K562 (cell line): ENCODE measurements at regions of chr6 and their contacts with region 1.

Region 1: DNA sequence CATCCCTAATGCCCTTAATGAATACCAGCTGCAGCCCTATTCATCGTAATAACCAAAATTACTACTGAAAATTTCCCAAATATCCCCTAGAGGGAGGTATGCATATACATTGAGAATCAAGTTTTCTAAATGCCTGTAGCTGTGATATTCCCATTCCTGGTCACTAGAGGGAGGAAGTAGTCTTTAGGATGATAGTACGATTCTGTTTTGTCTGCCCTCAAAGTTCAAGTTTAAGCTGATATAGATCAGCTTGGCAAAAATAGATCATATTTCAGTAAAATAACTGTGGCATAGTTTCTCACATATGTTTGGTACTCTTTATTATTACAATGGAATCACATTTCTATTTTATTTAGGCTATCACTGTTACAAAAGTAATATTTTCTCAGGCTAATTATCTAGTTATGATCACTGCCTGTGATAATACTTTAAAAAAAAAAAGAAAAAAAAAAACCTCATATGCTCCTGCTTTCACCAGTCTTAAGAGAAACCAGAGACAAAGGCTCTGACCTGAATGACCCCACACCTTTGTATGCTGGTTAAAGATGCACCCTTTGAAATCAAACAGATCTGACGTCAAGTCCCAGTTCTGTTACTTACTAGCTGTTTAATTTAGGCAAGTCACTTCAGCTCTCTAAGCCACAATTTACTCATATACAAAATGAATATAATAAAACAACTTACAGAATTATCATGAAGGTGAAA is 11.0 kb downstream of the TSPYL1 start:
- DNase-seq: peak; percentile 59 to 76 (median 68)
- ATAC-seq: peak; percentile 92
- H3K4me3 ChIP-seq: no peak overlapping the region
- H3K27ac ChIP-seq: no peak overlapping the region
- H3K4me1 ChIP-seq: no peaks in the 10 kb centered on the region; a peak in 1 of 5 replicates
- H3K27me3 ChIP-seq: no peaks in the 10 kb centered on the region
- CTCF ChIP-seq: peak; percentile 88 to 99 (median 97)
- EP300 ChIP-seq: no peak
- POLR2A ChIP-seq: no peak
- RAD21 ChIP-seq: peak; percentile 96 to 97

Region 2: DNA sequence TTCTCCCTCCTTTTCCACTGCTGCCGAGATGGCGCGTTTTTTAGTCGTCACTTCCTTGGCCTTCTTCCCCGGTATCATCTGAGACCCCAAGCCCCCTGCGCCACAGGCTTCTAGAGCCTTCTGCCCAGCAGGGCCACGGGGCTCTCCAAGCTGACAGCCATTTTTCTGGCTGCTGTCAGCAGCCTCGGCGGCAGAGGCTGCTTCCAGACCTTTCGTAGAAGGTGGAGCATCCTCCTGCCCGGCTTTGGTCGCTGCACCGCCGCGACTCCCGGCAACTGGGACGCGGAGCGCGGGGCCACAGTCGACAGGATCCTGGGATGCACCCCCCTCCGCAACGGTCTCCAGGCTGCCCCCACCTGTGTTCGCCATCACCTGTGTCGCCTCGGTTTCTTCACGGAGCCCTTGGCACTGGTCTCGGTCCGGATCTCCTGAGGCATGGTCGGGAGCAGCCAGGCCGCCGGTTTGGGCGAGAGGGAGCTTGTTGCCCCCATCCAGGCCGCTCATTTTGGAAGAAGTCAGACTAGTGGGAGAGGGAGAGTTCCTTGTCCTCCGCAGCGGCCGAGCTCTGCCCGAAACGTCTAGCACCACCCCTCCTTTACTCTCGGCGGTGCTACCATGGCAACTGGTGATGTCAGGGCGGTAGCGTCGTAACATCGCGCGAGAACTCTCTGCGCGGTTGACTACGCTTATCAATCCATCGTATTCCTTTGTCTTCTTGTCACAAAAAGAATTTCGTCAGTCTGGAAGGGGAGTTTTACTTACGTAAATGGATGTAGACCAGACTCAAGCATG is 15.0 kb before region 1 on chr6 and contains the start of gene TSPYL4:
- CTCF ChIA-PET with region 1: no interaction called
- POLR2A ChIA-PET with region 1: interaction called, 22 read pairs
- in situ Hi-C with region 1: no loop called
- intact Hi-C with region 1: no loop called
- DNase-seq: peak; percentile 88 to 96 (median 90)
- ATAC-seq: peak; percentile 91
- H3K4me3 ChIP-seq: peak within 1 kb of the TSS; percentile 71
- H3K27ac ChIP-seq: peak within 1 kb of the TSS; percentile 85
- H3K4me1 ChIP-seq: peaks cover 6 to 14% of the 10 kb centered on the region in 2 experiments; a peak in 3 of 5 replicates
- H3K27me3 ChIP-seq: no peaks in the 10 kb centered on the region
- CTCF ChIP-seq: no peak
- EP300 ChIP-seq: no peak
- POLR2A ChIP-seq: peak; percentile 83
- RAD21 ChIP-seq: no peak
- polyA plus RNA-seq, gene TSPYL4: 0.69 to 0.81 TPM

Region 3: DNA sequence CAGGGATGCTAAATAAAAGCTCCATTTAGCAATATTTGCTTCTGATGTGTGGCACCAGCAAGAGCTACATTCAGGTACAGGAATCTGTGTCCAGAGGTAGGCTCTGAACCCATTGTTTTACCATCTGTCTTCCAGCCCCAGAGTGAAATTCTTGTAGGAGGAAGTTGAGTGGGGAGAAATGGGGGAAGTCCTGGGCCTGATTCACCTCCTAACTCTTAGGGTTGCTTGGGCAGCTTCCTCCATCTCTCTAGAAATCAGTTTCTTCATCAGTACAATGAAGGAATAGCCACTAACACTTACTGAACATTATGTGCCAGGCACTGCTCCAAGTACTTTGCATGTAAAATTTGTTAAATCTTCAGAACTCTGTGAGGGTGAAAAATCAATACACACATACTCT is 46.1 kb after region 1 on chr6:
- CTCF ChIA-PET with region 1: interaction called, 3 read pairs
- POLR2A ChIA-PET with region 1: interaction called, 3 read pairs
- in situ Hi-C with region 1: no loop called
- intact Hi-C with region 1: loop called (anchors 1 kb)
- DNase-seq: no peak
- ATAC-seq: no peak
- H3K4me3 ChIP-seq: no peak overlapping the region
- H3K27ac ChIP-seq: no peak overlapping the region
- H3K4me1 ChIP-seq: no peaks in the 10 kb centered on the region
- H3K27me3 ChIP-seq: peaks cover 0 to 2% of the 10 kb centered on the region in 2 experiments; a peak in 1 of 5 replicates
- CTCF ChIP-seq: no peak
- EP300 ChIP-seq: no peak
- POLR2A ChIP-seq: no peak
- RAD21 ChIP-seq: no peak

Region 4: DNA sequence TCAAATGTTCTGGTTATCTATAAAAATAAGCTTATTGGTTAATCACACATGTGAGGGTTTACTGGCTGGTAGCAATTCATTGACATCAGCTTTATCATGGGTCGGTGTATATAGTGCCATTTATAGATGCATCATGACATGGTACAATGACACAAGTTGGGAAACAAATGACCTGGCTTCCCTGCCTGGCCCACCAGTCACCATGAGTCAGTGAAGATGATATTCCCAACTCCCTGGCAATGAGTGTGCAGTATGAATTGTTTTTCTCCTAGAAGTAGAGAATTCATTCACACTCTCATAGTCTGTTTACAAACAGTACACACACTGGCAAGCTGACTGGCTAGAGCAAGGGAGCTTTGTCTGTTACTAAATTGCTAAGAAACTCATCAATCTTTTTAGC is 155.3 kb after region 1 on chr6:
- CTCF ChIA-PET with region 1: no interaction called
- POLR2A ChIA-PET with region 1: no interaction called
- in situ Hi-C with region 1: no loop called
- intact Hi-C with region 1: no loop called
- DNase-seq: no peak
- ATAC-seq: no peak
- H3K4me3 ChIP-seq: no peak overlapping the region
- H3K27ac ChIP-seq: no peak overlapping the region
- H3K4me1 ChIP-seq: no peaks in the 10 kb centered on the region
- H3K27me3 ChIP-seq: peaks cover 0 to 3% of the 10 kb centered on the region in 2 experiments; a peak in 2 of 5 replicates
- CTCF ChIP-seq: no peak
- EP300 ChIP-seq: no peak
- POLR2A ChIP-seq: no peak
- RAD21 ChIP-seq: no peak

Region 5: GRCh38 chr6:116561377-116562018 is 292.8 kb after region 1 on chr6:
- CTCF ChIA-PET with region 1: interaction called, 7 read pairs
- POLR2A ChIA-PET with region 1: interaction called, 3 read pairs
- in situ Hi-C with region 1: no loop called
- intact Hi-C with region 1: loop called (anchors 1 kb)
- DNase-seq: peak; percentile 62 to 84 (median 67)
- ATAC-seq: peak; percentile 82
- H3K4me3 ChIP-seq: no peak overlapping the region
- H3K27ac ChIP-seq: no peak overlapping the region
- H3K4me1 ChIP-seq: peaks cover 15 to 17% of the 10 kb centered on the region in 2 experiments; a peak in 4 of 5 replicates
- H3K27me3 ChIP-seq: no peaks in the 10 kb centered on the region
- CTCF ChIP-seq: peak; percentile 76 to 88 (median 84)
- EP300 ChIP-seq: no peak
- POLR2A ChIP-seq: no peak
- RAD21 ChIP-seq: peak; percentile 81 to 85

Region 6: DNA sequence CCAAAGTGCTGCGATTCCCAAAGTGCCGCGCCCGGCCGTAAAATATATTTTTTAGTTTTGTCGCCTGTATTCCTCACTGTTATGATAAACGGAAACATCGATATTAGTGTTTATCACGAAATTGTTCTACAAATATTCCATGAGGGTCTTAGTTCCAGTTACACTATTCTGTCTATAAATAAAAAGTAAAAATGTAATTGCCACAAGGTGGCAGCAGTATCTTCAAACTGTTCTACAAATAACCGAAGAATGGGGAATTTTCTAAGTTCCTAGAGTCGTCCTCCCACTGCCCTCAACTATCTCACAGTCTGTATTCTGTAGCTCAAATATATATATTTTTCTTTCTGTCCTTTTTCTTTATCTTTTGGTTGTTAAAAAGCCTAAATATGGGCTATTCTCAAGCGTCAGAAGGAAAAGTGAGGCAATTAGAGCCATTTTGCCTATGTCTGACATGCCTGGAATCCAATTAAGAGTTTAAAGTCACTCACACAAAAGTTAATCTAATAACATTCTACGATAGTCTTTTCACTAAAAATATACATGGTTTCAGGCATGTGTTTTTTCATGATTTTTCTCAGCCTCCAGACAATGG is 510.9 kb after region 1 on chr6:
- CTCF ChIA-PET with region 1: no interaction called
- POLR2A ChIA-PET with region 1: no interaction called
- in situ Hi-C with region 1: no loop called
- intact Hi-C with region 1: loop called (anchors 5 kb)
- DNase-seq: peak; percentile 10 to 70 (median 19)
- ATAC-seq: peak; percentile 93
- H3K4me3 ChIP-seq: no peak overlapping the region
- H3K27ac ChIP-seq: no peak overlapping the region
- H3K4me1 ChIP-seq: no peaks in the 10 kb centered on the region
- H3K27me3 ChIP-seq: no peaks in the 10 kb centered on the region
- CTCF ChIP-seq: peak; percentile 40 to 60 (median 46); a peak in 4 of 6 replicates
- EP300 ChIP-seq: no peak
- POLR2A ChIP-seq: no peak
- RAD21 ChIP-seq: peak; percentile 51 to 65; a peak in 3 of 4 replicates

Region 7: GRCh38 chr6:116969211-116969863 is 700.6 kb after region 1 on chr6:
- CTCF ChIA-PET with region 1: no interaction called
- POLR2A ChIA-PET with region 1: no interaction called
- in situ Hi-C with region 1: no loop called
- intact Hi-C with region 1: loop called (anchors 5 kb)
- DNase-seq: peak; percentile 19 to 64 (median 42)
- ATAC-seq: peak; percentile 89
- H3K4me3 ChIP-seq: no peak overlapping the region
- H3K27ac ChIP-seq: no peak overlapping the region
- H3K4me1 ChIP-seq: no peaks in the 10 kb centered on the region
- H3K27me3 ChIP-seq: no peaks in the 10 kb centered on the region
- CTCF ChIP-seq: peak; percentile 58 to 69 (median 63)
- EP300 ChIP-seq: no peak
- POLR2A ChIP-seq: no peak
- RAD21 ChIP-seq: peak; percentile 28 to 75